CD4-positive, alpha-beta T cell (primary cell): ENCODE measurements at regions of chrX and their contacts with region 1.

Region 1: DNA sequence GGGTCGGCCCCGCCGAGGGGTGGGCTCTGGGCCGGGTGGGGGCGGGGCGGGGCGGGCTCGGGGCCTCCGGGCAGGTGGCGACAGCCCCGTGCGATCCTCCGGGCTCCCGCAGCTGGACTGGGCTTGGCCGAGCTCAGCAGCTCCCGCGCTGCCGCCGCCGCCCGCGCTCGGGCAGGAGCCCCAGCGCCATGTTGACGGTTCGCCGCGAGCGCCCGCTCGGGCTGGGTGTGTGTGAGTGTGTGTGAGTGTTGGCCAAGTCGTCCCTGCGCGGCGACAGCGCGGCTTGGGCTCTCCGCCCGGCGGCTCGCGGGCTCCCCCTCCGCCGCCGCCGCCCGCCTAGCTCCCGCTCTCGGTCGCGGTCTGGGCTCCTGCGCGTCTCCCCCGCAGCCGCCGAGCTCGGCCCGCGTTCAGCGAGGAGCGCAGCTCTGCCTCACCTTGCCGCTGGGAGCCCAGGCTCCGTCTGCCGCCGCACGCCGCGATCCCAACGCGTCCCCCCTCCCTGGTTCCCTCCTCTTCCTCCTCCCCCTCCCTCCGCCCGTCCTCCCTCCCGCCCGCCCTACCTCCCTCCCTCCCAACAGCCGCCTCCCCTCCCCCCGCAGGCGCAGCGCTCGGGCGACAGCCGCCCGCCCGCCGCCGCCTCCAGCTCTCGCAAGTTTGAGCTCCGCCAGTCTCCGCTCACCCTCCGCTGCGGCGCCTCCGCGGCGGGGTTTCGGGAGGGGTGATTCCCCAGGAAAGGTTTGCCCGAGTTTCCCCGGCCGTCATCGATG is at the start of gene BCOR:
- DNase-seq: peak; percentile 55 to 88 (median 77)
- ATAC-seq: peak; percentile 27
- H3K4me3 ChIP-seq: peak within 1 kb of the TSS; percentile 69
- H3K4me3 Mint-ChIP-seq: peak within 1 kb of the TSS; percentile 95
- H3K27ac ChIP-seq: peak within 1 kb of the TSS in 1 of 2 donors; percentile 74
- H3K27ac Mint-ChIP-seq: peak within 1 kb of the TSS; percentile 96
- H3K4me1 ChIP-seq: peaks cover 41% of the 10 kb centered on the region
- H3K4me1 Mint-ChIP-seq: peaks cover 27% of the 10 kb centered on the region
- H3K27me3 ChIP-seq: no peaks in the 10 kb centered on the region
- H3K27me3 Mint-ChIP-seq: no peaks in the 10 kb centered on the region
- CTCF ChIP-seq: no peak
- total RNA-seq, gene BCOR: 26.1 to 26.3 TPM

Region 2: GRCh38 chrX:39859991-39860861 is 237.5 kb before region 1 on chrX:
- CTCF ChIA-PET with region 1: interaction called, 11 read pairs
- POLR2A ChIA-PET with region 1: interaction called, 11 read pairs
- intact Hi-C with region 1: loop called in 1 of 2 experiments (anchors 5 kb)
- DNase-seq: peak in 13 of 14 experiments; percentile 34 to 82 (median 63)
- ATAC-seq: peak; percentile 41
- H3K4me3 ChIP-seq: no peak overlapping the region
- H3K4me3 Mint-ChIP-seq: peak overlapping the region; percentile 30
- H3K27ac ChIP-seq: no peak overlapping the region
- H3K27ac Mint-ChIP-seq: peak overlapping the region; percentile 87
- H3K4me1 ChIP-seq: peaks cover 40% of the 10 kb centered on the region
- H3K4me1 Mint-ChIP-seq: peaks cover 28% of the 10 kb centered on the region
- H3K27me3 ChIP-seq: no peaks in the 10 kb centered on the region
- H3K27me3 Mint-ChIP-seq: no peaks in the 10 kb centered on the region
- CTCF ChIP-seq: no peak

Region 3: GRCh38 chrX:40083120-40083978 is 14.3 kb before region 1 on chrX:
- CTCF ChIA-PET with region 1: interaction called, 3 read pairs
- POLR2A ChIA-PET with region 1: interaction called, 25 read pairs
- intact Hi-C with region 1: no loop called
- DNase-seq: peak in 2 of 14 experiments; percentile 38 to 40
- ATAC-seq: peak; percentile 51
- H3K4me3 ChIP-seq: peak overlapping the region; percentile 51
- H3K4me3 Mint-ChIP-seq: peak overlapping the region; percentile 89
- H3K27ac ChIP-seq: no peak overlapping the region
- H3K27ac Mint-ChIP-seq: peak overlapping the region; percentile 36
- H3K4me1 ChIP-seq: peaks cover 71% of the 10 kb centered on the region
- H3K4me1 Mint-ChIP-seq: peaks cover 58% of the 10 kb centered on the region
- H3K27me3 ChIP-seq: no peaks in the 10 kb centered on the region
- H3K27me3 Mint-ChIP-seq: no peaks in the 10 kb centered on the region
- CTCF ChIP-seq: no peak

Region 4: GRCh38 chrX:40146262-40147125 is 48.8 kb after region 1 on chrX:
- CTCF ChIA-PET with region 1: no interaction called
- POLR2A ChIA-PET with region 1: interaction called, 82 read pairs
- intact Hi-C with region 1: loop called (anchors 5 kb)
- DNase-seq: peak in 5 of 14 experiments; percentile 30 to 72 (median 57)
- ATAC-seq: peak; percentile 86
- H3K4me3 ChIP-seq: peak overlapping the region; percentile 52
- H3K4me3 Mint-ChIP-seq: peak overlapping the region; percentile 68
- H3K27ac ChIP-seq: no peak overlapping the region
- H3K27ac Mint-ChIP-seq: no peak overlapping the region
- H3K4me1 ChIP-seq: peaks cover 28% of the 10 kb centered on the region
- H3K4me1 Mint-ChIP-seq: no peaks in the 10 kb centered on the region
- H3K27me3 ChIP-seq: no peaks in the 10 kb centered on the region
- H3K27me3 Mint-ChIP-seq: no peaks in the 10 kb centered on the region
- CTCF ChIP-seq: no peak

Region 5: DNA sequence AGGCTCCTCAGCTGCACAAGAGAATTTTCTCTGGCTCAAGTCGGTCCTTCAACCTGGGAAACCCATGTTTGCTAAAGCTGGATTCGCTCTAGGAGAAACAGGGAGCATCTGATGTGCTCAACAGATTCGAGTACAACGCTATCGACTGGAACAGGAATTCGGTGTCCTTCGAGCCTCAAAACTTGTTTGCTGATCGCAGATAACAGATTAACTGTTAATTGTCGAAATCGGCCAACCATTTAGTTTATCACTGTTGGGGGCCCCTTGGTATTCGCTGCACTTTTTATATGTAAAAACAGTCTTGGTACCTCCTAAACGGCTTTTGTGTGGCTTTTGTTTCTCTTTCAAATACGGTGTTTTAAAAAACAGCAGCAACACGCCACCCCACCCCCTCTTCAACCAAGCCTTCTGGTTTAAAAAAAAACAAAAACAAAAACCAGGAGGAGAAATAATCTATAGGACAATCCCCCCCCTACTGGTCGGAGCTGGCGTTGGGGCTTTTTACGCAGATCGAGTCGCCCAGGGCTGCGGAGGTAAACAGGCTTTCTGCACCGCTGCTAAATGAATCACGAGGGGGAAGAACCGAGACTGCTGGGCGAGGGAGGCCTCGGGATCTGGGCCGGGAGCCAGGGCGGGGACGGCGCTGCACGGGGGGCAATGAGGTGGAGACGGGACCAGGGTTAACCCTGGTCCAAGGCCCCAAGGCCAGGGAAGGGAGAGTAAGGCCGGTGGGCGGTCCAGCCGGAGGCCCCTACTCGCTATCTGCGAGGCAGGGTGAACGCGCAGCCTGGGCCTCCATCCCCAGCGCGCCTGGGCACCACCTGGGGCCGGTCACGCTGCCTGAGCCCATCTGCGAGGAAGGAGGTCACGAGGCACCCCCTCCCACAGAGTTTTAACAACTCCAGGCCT is 71.8 kb after region 1 on chrX:
- CTCF ChIA-PET with region 1: no interaction called
- POLR2A ChIA-PET with region 1: interaction called, 236 read pairs
- intact Hi-C with region 1: loop called (anchors 2 to 5 kb)
- DNase-seq: peak; percentile 64 to 91 (median 78)
- ATAC-seq: peak; percentile 65
- H3K4me3 ChIP-seq: peak overlapping the region; percentile 73
- H3K4me3 Mint-ChIP-seq: peak overlapping the region; percentile 90
- H3K27ac ChIP-seq: peak overlapping the region; percentile 75 to 96
- H3K27ac Mint-ChIP-seq: peak overlapping the region; percentile 100
- H3K4me1 ChIP-seq: peaks cover 77% of the 10 kb centered on the region
- H3K4me1 Mint-ChIP-seq: peaks cover 57% of the 10 kb centered on the region
- H3K27me3 ChIP-seq: no peaks in the 10 kb centered on the region
- H3K27me3 Mint-ChIP-seq: no peaks in the 10 kb centered on the region
- CTCF ChIP-seq: peak; percentile 28